Caco-2 (cell line): ENCODE measurements at regions of chr2 and their contacts with region 1.

Region 1: GRCh38 chr2:11949732-11950523 is 203.5 kb downstream of the LPIN1 start:
- DNase-seq: no peak
- H3K4me3 ChIP-seq: no peak overlapping the region
- H3K4me3 Mint-ChIP-seq: no peak overlapping the region
- H3K27ac Mint-ChIP-seq: no peak overlapping the region
- H3K4me1 ChIP-seq: no peaks in the 10 kb centered on the region
- H3K4me1 Mint-ChIP-seq: no peaks in the 10 kb centered on the region
- H3K27me3 ChIP-seq: no peaks in the 10 kb centered on the region
- H3K27me3 Mint-ChIP-seq: peaks cover 14% of the 10 kb centered on the region
- CTCF ChIP-seq: no peak

Region 2: GRCh38 chr2:11829947-11830707 is 119.8 kb before region 1 on chr2:
- CTCF ChIA-PET with region 1: interaction called, 7 read pairs
- POLR2A ChIA-PET with region 1: no interaction called
- intact Hi-C with region 1: loop called (anchors 5 kb)
- DNase-seq: peak; percentile 60 to 73
- H3K4me3 ChIP-seq: no peak overlapping the region
- H3K4me3 Mint-ChIP-seq: peak overlapping the region; percentile 55
- H3K27ac Mint-ChIP-seq: no peak overlapping the region
- H3K4me1 ChIP-seq: no peaks in the 10 kb centered on the region
- H3K4me1 Mint-ChIP-seq: no peaks in the 10 kb centered on the region
- H3K27me3 ChIP-seq: no peaks in the 10 kb centered on the region
- H3K27me3 Mint-ChIP-seq: no peaks in the 10 kb centered on the region
- CTCF ChIP-seq: peak in 1 of 2 experiments; percentile 33

Region 3: GRCh38 chr2:11863513-11864328 is 86.2 kb before region 1 on chr2:
- CTCF ChIA-PET with region 1: interaction called, 4 read pairs
- POLR2A ChIA-PET with region 1: no interaction called
- intact Hi-C with region 1: loop called (anchors 1 kb)
- DNase-seq: peak; percentile 79 to 81
- H3K4me3 ChIP-seq: no peak overlapping the region
- H3K4me3 Mint-ChIP-seq: peak overlapping the region; percentile 19
- H3K27ac Mint-ChIP-seq: no peak overlapping the region
- H3K4me1 ChIP-seq: no peaks in the 10 kb centered on the region
- H3K4me1 Mint-ChIP-seq: no peaks in the 10 kb centered on the region
- H3K27me3 ChIP-seq: no peaks in the 10 kb centered on the region
- H3K27me3 Mint-ChIP-seq: peaks cover 4% of the 10 kb centered on the region
- CTCF ChIP-seq: peak; percentile 91 to 92